ENCODE measurements at regions of chr6 and their contacts with region 1.

Region 1: DNA sequence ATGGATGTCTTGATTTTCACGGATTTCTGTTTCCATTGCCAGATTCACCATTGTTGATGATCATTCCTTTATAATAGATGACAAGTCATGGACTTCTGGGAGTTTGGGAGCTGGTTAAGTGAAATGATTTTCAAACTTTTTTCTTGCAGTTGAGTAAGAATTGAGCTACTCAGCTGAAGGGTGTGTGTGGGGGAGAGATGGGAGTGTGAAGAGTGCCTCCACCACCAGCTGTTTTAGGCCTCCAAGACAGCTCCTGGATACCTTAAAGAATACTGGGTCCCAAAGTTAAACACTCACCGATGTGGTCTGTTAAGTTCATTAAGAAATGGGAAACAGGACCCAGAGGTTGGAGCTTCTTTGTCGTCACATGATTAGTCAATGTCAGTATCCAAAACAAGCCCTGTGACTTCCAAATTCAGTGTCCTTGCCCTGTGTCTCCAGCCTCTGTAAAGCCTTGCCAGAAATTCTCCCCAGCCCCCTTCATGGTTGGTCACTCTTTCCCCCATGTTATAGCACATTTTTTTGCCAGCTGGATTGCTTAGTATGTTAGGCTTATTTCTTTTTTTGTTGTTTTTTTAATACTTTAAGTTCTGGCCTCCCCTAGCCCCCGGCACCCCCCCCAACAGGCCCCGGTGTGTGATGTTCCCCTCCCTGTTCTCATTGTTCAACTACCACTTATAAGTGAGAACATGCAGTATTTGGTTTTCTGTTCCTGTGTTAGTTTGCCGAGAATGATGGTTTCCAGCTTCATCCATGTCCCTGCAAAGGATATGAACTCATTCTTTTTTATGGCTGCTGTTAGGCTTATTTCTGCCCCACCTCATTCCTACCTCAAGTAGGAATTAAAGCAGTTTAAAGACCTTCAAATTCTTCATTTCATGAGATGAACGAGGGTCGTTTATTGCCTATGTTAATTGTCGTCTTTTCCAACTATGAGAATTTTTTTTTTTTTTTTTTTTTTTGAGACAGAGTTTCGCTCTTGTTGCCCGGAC is 26.9 kb downstream of the BICRAL start:
- DNase-seq: no peak
- H3K4me3 Mint-ChIP-seq: no peak overlapping the region
- H3K27ac Mint-ChIP-seq: no peak overlapping the region
- H3K4me1 Mint-ChIP-seq: no peaks in the 10 kb centered on the region
- H3K27me3 Mint-ChIP-seq: no peaks in the 10 kb centered on the region
- CTCF ChIP-seq: no peak

Region 2: GRCh38 chr6:41705996-41706835 is 1102.6 kb before region 1 on chr6:
- CTCF ChIA-PET with region 1: no interaction called
- POLR2A ChIA-PET with region 1: no interaction called
- intact Hi-C with region 1: no loop called
- DNase-seq: peak; percentile 79
- H3K4me3 Mint-ChIP-seq: peak overlapping the region; percentile 46
- H3K27ac Mint-ChIP-seq: peak overlapping the region; percentile 84
- H3K4me1 Mint-ChIP-seq: peaks cover 36% of the 10 kb centered on the region
- H3K27me3 Mint-ChIP-seq: no peaks in the 10 kb centered on the region
- CTCF ChIP-seq: peak; percentile 73

Region 3: GRCh38 chr6:42819803-42820511 is 11.2 kb after region 1 on chr6:
- CTCF ChIA-PET with region 1: no interaction called
- POLR2A ChIA-PET with region 1: no interaction called
- intact Hi-C with region 1: loop called (anchors 2 kb)
- DNase-seq: no peak
- H3K4me3 Mint-ChIP-seq: no peak overlapping the region
- H3K27ac Mint-ChIP-seq: no peak overlapping the region
- H3K4me1 Mint-ChIP-seq: peaks cover 10% of the 10 kb centered on the region
- H3K27me3 Mint-ChIP-seq: no peaks in the 10 kb centered on the region
- CTCF ChIP-seq: no peak

Region 4: DNA sequence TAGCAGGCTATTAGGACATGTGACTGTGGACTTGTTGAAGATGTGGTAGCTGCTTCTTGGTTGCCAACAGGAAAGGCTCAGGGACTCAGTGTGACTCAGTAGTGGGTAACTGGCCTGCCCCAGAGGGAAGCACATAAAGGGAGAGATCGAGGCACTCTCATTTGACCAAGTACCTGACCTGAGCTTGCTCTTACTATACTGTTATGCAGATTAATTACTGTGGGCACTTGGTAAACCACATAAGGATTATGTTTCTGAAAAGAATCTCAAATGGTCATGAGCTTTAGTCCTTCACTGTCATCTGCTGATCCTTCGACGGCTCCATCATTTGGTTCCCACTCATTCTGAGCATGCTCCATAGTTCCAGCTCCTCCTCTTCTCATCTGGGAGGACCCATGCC is 22.4 kb after region 1 on chr6:
- CTCF ChIA-PET with region 1: interaction called, 11 read pairs
- POLR2A ChIA-PET with region 1: interaction called, 3 read pairs
- intact Hi-C with region 1: no loop called
- DNase-seq: no peak
- H3K4me3 Mint-ChIP-seq: no peak overlapping the region
- H3K27ac Mint-ChIP-seq: peak overlapping the region; percentile 23
- H3K4me1 Mint-ChIP-seq: no peaks in the 10 kb centered on the region
- H3K27me3 Mint-ChIP-seq: no peaks in the 10 kb centered on the region
- CTCF ChIP-seq: no peak